ENCODE measurements at regions of chr4 and their contacts with region 1.

Region 1: DNA sequence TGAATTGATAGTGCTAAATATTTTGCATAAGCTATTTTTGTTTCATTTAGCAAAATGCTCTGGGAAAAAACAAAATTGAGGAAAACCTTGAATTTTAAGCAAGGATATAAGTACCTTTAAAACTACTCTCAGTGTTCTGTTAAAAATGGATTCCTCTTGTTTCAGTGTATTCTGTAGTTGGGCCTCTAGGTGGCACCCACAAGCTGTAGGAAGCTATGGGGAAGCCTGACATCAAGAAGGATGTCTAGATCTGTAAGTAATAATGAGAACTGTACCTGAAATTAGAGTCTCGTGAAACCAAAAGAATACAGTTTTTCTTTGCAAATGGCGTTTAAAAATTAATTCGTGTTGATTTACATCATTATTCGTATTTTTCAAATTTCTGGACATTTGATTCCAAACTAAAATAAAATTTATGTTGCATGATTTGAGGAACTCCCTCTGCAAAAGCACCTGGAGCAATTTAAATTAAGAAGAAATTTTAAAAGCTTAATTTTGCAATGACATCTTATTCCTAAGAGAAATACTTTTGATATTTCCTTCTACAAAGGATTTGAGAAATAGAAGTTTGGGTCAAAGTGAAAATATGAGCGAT is 51.2 kb downstream of the TMPRSS11E start:
- DNase-seq: peak; percentile 66
- H3K4me3 ChIP-seq: no peak overlapping the region
- H3K27ac ChIP-seq: no peak overlapping the region
- H3K4me1 ChIP-seq: no peaks in the 10 kb centered on the region
- CTCF ChIP-seq: peak; percentile 96

Region 2: DNA sequence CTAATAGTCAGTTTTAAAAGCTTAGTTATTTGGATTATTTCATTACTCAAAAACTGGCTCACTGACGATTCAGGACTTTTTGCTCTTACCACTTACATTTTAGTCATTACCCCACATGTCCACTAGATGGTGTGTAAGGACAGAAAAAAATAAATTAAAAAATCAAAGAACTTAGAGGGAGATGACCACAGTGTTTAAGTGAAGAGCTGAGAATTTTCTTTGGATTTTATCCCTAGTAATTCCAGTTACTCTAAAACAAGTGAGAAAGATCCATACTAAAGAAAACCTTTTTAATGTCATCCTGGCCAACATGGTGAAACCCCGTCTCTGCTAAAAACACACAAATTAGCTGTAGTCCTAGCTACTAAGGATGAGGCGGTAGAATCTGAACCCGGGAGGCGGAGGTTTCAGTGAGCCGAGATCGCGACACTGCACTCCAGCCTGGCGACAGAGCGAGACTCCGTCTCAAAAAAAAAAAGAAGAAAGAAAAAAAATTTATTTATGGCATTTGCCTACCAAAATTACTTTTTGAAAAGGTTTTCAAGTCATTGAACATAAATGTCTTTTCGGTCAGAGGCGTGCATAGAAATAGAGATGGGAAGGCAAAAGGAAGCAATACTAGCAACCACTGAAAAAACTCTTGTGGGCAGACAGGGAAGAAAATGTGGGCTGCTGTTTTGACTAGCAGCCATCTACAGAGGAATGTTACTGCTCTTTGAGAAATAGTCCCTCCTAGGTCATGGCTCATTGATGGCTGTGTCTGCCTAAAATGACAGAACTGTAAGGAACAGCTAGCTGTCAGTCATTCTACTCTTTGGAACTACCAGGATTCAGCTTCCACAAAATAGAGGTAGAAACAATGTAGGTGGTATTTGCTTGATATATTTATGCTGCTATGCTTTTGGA is 226.4 kb before region 1 on chr4:
- CTCF ChIA-PET with region 1: no interaction called
- POLR2A ChIA-PET with region 1: no interaction called
- intact Hi-C with region 1: loop called (anchors 5 kb)
- DNase-seq: peak; percentile 42
- H3K4me3 ChIP-seq: peak overlapping the region; percentile 18
- H3K27ac ChIP-seq: no peak overlapping the region
- H3K4me1 ChIP-seq: no peaks in the 10 kb centered on the region
- CTCF ChIP-seq: peak; percentile 86

Region 3: GRCh38 chr4:69167300-69167699 is 668.8 kb after region 1 on chr4:
- CTCF ChIA-PET with region 1: no interaction called
- POLR2A ChIA-PET with region 1: no interaction called
- intact Hi-C with region 1: loop called (anchors 1 kb)
- DNase-seq: no peak
- H3K4me3 ChIP-seq: no peak overlapping the region
- H3K27ac ChIP-seq: no peak overlapping the region
- H3K4me1 ChIP-seq: no peaks in the 10 kb centered on the region
- CTCF ChIP-seq: no peak

Measured in OCI-LY7 (cell line).